Ovary (tissue), 10 donors: ENCODE measurements at regions of chr11 and their contacts with region 1.

Region 1: GRCh38 chr11:11000579-11001283 is 142.9 kb upstream of the ZBED5 start:
- DNase-seq: no peak
- H3K4me3 ChIP-seq: no peak overlapping the region
- H3K27ac ChIP-seq: no peak overlapping the region
- H3K4me1 ChIP-seq: no peaks in the 10 kb centered on the region
- H3K27me3 ChIP-seq: no peaks in the 10 kb centered on the region
- CTCF ChIP-seq: no peak
- EP300 ChIP-seq: no peak
- POLR2A ChIP-seq: no peak

Region 2: DNA sequence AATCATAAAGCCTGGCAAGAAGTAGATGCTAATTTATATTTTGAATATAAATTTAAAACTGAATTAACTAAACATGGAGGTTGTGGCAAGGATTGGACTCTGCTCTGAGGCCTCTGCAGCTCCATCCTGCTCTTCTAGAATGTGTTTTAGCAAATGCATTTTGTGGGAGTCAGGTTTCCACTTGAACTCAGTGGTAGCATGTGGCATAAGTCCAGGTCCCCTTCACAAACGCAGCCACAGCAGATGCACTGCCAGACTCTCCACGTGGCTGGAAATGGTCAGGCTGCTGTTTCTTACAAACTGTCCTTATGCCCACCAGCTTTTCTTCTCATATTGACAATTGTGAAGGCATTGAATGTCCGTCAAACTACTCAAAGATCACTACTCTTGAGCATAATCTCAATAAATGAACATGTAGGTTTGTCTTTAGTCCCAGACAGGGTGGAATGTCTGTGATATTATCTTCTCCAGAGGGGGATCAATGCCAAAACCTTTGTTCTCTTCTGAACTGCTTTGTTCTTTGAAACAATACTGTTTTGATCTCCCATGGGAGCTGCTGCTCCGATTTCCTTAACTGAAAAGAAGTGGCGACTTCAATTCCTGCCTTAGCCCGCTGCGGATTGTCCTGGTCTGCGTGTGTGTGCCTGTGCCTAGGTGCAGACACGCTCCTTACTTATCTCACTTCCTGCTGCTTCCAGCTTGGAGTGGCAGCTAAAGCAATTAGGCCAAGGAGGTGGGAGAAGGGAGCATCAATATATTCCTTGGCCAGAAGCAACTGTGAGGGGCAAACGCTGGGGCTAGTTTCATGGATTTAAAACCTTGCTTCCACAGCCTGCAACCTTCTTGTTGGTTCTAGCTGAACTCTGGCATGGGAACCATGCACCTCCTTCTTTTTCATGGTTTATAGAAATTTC is 216.2 kb before region 1 on chr11:
- intact Hi-C with region 1: loop called in 1 of 4 experiments (anchors 10 kb)
- DNase-seq: no peak
- H3K4me3 ChIP-seq: no peak overlapping the region
- H3K27ac ChIP-seq: no peak overlapping the region
- H3K4me1 ChIP-seq: no peaks in the 10 kb centered on the region
- H3K27me3 ChIP-seq: no peaks in the 10 kb centered on the region
- CTCF ChIP-seq: no peak
- EP300 ChIP-seq: no peak
- POLR2A ChIP-seq: no peak

Region 3: GRCh38 chr11:10838083-10838482 is 162.6 kb before region 1 on chr11:
- intact Hi-C with region 1: no loop called
- DNase-seq: no peak
- H3K4me3 ChIP-seq: no peak overlapping the region
- H3K27ac ChIP-seq: no peak overlapping the region
- H3K4me1 ChIP-seq: no peaks in the 10 kb centered on the region
- H3K27me3 ChIP-seq: no peaks in the 10 kb centered on the region
- CTCF ChIP-seq: no peak
- EP300 ChIP-seq: no peak
- POLR2A ChIP-seq: no peak

Region 4: DNA sequence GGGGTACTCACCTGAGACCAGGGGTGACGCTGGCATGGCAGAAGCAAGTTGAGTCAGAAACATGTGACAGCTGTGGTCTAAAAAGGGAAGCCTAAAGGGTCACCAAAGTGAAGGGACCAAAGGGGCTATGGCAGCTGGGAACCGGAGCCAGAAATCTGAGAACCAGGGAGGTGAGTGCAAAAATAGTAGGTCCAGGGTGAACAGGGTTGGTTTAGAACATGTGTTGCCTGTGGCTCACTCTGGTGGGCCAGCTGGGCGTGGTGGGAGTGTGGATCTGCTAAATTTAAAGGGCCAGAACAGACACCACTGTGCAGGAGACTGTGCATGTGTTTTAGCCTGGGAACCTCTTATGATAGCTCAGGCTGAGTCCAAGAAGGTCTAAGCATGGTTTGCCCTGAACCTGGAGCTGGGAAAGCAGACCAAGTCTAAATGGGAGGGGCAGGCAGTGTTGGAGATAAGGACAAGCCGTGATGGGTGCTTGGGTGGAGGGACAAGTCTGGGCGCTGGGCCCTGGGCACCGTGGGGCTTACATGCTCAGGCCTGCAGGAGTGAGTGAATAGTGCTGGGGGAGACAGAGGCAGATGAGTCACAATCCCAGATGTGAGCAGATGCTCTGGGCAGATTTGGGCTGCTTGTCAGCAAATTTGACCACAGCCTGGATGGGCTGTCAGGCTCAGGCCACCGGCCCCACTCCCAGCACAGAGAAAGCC is 101.5 kb before region 1 on chr11:
- intact Hi-C with region 1: no loop called
- DNase-seq: peak; percentile 27 to 54 (median 42)
- H3K4me3 ChIP-seq: no peak overlapping the region
- H3K27ac ChIP-seq: peak overlapping the region; percentile 43 to 84
- H3K4me1 ChIP-seq: peaks cover 11% of the 10 kb centered on the region
- H3K27me3 ChIP-seq: no peaks in the 10 kb centered on the region
- CTCF ChIP-seq: no peak
- EP300 ChIP-seq: no peak
- POLR2A ChIP-seq: no peak